H1 (cell line): ENCODE measurements at regions of chr6 and their contacts with region 1.

Region 1: GRCh38 chr6:5471044-5471443 is 209.7 kb downstream of the FARS2 start:
- DNase-seq: peak in 1 of 2 experiments; percentile 27
- H3K4me3 ChIP-seq: no peak overlapping the region; a peak in 1 of 8 replicates
- H3K27ac ChIP-seq: no peak overlapping the region
- H3K4me1 ChIP-seq: peaks cover 7 to 25% (median 15%) of the 10 kb centered on the region in 4 experiments; a peak in 5 of 7 replicates
- H3K27me3 ChIP-seq: no peaks in the 10 kb centered on the region
- CTCF ChIP-seq: peak; percentile 67 to 78 (median 68)
- EP300 ChIP-seq: no peak
- POLR2A ChIP-seq: no peak
- RAD21 ChIP-seq: peak; percentile 85 to 87

Region 2: GRCh38 chr6:5422321-5422915 is 48.6 kb before region 1 on chr6:
- CTCF ChIA-PET with region 1: interaction called, 25 read pairs
- POLR2A ChIA-PET with region 1: no interaction called
- DNase-seq: peak; percentile 38 to 57
- H3K4me3 ChIP-seq: no peak overlapping the region
- H3K27ac ChIP-seq: no peak overlapping the region
- H3K4me1 ChIP-seq: peaks cover 0 to 2% (median 0%) of the 10 kb centered on the region in 4 experiments; a peak in 1 of 7 replicates
- H3K27me3 ChIP-seq: no peaks in the 10 kb centered on the region
- CTCF ChIP-seq: peak; percentile 76 to 94 (median 94)
- EP300 ChIP-seq: no peak
- POLR2A ChIP-seq: no peak
- RAD21 ChIP-seq: peak; percentile 95 to 97

Region 3: DNA sequence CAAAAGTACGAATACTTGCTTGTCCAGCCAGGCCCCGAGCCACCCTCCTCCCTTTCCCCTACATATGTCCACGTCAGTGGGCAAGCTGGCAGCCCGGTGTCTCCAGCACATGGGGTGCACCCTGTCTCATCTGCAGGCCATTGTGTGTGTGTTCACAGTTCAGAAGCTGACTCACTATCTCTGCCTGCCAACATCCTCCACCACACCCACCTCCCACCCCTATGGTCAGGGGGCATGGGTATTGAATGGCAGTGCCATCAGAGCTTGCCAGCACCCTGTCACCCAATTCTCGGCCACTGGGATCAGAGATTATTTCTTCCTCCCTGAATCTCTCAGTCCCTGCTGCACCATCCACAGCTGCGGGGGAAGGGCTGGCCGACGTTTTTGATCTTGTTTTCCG is 14.0 kb before region 1 on chr6:
- CTCF ChIA-PET with region 1: interaction called, 36 read pairs
- POLR2A ChIA-PET with region 1: interaction called, 3 read pairs
- DNase-seq: no peak
- H3K4me3 ChIP-seq: no peak overlapping the region
- H3K27ac ChIP-seq: no peak overlapping the region
- H3K4me1 ChIP-seq: peaks cover 0 to 5% (median 4%) of the 10 kb centered on the region in 4 experiments; a peak in 5 of 7 replicates
- H3K27me3 ChIP-seq: no peaks in the 10 kb centered on the region
- CTCF ChIP-seq: no peak
- EP300 ChIP-seq: no peak
- POLR2A ChIP-seq: no peak
- RAD21 ChIP-seq: no peak

Region 4: DNA sequence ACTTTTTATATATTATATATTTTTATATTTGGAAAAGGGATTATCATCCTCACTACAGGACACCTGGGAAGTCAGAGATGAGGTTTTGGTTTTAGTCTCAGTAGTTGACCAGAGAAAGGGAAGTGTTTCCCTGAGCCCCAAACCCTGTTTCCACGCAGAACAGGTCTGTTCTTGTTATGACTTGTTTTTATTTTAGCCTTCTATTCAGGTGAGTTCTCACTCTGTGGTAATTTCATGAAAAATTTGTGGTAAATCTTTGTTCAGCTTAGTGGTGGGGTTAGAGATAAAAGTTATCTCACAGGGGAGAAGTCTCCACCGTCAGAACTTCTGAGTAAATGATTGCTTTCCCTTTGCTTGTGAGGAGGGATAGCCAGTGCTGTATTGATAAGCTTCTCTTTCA is 15.2 kb after region 1 on chr6:
- CTCF ChIA-PET with region 1: interaction called, 29 read pairs
- POLR2A ChIA-PET with region 1: interaction called, 3 read pairs
- DNase-seq: no peak
- H3K4me3 ChIP-seq: no peak overlapping the region
- H3K27ac ChIP-seq: no peak overlapping the region
- H3K4me1 ChIP-seq: no peaks in the 10 kb centered on the region
- H3K27me3 ChIP-seq: no peaks in the 10 kb centered on the region; a peak in 1 of 7 replicates
- CTCF ChIP-seq: no peak
- EP300 ChIP-seq: no peak
- POLR2A ChIP-seq: no peak
- RAD21 ChIP-seq: no peak

Region 5: GRCh38 chr6:5506149-5506548 is 35.1 kb after region 1 on chr6:
- CTCF ChIA-PET with region 1: interaction called, 10 read pairs
- POLR2A ChIA-PET with region 1: no interaction called
- DNase-seq: no peak
- H3K4me3 ChIP-seq: no peak overlapping the region
- H3K27ac ChIP-seq: no peak overlapping the region
- H3K4me1 ChIP-seq: peaks cover 2 to 8% (median 6%) of the 10 kb centered on the region in 4 experiments
- H3K27me3 ChIP-seq: no peaks in the 10 kb centered on the region
- CTCF ChIP-seq: no peak
- EP300 ChIP-seq: no peak
- POLR2A ChIP-seq: no peak
- RAD21 ChIP-seq: no peak

Region 6: GRCh38 chr6:5518936-5519491 is 48.0 kb after region 1 on chr6:
- CTCF ChIA-PET with region 1: interaction called, 10 read pairs
- POLR2A ChIA-PET with region 1: no interaction called
- DNase-seq: no peak
- H3K4me3 ChIP-seq: no peak overlapping the region
- H3K27ac ChIP-seq: no peak overlapping the region
- H3K4me1 ChIP-seq: no peaks in the 10 kb centered on the region
- H3K27me3 ChIP-seq: no peaks in the 10 kb centered on the region
- CTCF ChIP-seq: no peak
- EP300 ChIP-seq: no peak
- POLR2A ChIP-seq: no peak
- RAD21 ChIP-seq: no peak

Region 7: GRCh38 chr6:5670811-5671561 is 199.9 kb after region 1 on chr6:
- CTCF ChIA-PET with region 1: interaction called, 15 read pairs
- POLR2A ChIA-PET with region 1: no interaction called
- DNase-seq: no peak
- H3K4me3 ChIP-seq: no peak overlapping the region
- H3K27ac ChIP-seq: no peak overlapping the region
- H3K4me1 ChIP-seq: peaks cover 6 to 19% (median 14%) of the 10 kb centered on the region in 4 experiments
- H3K27me3 ChIP-seq: no peaks in the 10 kb centered on the region
- CTCF ChIP-seq: no peak
- EP300 ChIP-seq: no peak
- POLR2A ChIP-seq: no peak
- RAD21 ChIP-seq: no peak